Calu3 (cell line): ENCODE measurements at regions of chr16 and their contacts with region 1.

Region 1: DNA sequence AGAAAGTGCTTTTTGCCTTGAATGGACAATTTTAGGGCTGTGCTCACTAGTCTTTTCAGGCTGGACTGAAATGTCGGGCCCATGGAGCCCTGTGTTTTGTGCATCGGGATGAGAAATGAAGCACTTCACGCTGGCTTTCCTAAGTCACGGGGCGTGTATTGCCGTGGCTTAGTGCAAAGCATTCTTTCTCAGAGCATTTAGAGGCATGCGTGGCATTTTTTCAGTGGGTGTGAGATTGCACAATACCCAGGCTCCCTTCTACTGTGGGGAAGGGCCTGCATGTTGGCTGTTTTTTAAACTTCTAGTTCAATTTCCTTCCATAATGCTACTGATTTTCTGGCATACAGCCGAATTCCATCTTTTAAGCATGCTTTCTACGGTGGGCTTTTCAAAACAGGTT is 12.6 kb upstream of the POLR3E start:
- DNase-seq: no peak
- H3K4me3 Mint-ChIP-seq: no peak overlapping the region
- H3K27ac Mint-ChIP-seq: no peak overlapping the region
- H3K4me1 Mint-ChIP-seq: no peaks in the 10 kb centered on the region
- H3K27me3 Mint-ChIP-seq: no peaks in the 10 kb centered on the region
- CTCF ChIP-seq: no peak

Region 2: DNA sequence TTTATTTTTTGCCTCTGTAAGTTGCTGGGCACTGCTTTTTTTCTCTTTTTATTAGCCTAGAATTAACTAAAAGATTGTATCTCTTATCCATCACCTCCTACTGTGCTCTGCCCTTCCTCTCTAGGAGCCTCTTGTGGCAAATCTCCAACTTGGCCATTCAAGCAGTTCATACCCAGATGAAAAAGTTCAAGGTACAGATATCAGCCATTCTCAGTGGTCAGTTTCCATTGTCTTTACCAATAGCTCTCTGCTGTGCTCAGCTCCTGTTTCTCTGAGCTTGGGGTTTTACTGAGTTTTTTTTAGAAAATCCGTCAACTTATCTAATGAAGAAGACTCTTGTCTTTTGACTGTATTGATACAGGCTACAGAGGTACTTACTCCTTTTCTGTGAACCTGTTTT is 261.1 kb before region 1 on chr16:
- CTCF ChIA-PET with region 1: no interaction called
- intact Hi-C with region 1: no loop called
- DNase-seq: no peak
- H3K4me3 Mint-ChIP-seq: no peak overlapping the region
- H3K27ac Mint-ChIP-seq: no peak overlapping the region
- H3K4me1 Mint-ChIP-seq: peaks cover 75% of the 10 kb centered on the region
- H3K27me3 Mint-ChIP-seq: no peaks in the 10 kb centered on the region
- CTCF ChIP-seq: no peak

Region 3: GRCh38 chr16:22240023-22240710 is 44.5 kb before region 1 on chr16:
- CTCF ChIA-PET with region 1: no interaction called
- intact Hi-C with region 1: loop called (anchors 2 kb)
- DNase-seq: no peak
- H3K4me3 Mint-ChIP-seq: no peak overlapping the region
- H3K27ac Mint-ChIP-seq: no peak overlapping the region
- H3K4me1 Mint-ChIP-seq: peaks cover 8% of the 10 kb centered on the region
- H3K27me3 Mint-ChIP-seq: no peaks in the 10 kb centered on the region
- CTCF ChIP-seq: no peak

Region 4: GRCh38 chr16:22424161-22424937 is 139.7 kb after region 1 on chr16:
- CTCF ChIA-PET with region 1: no interaction called
- intact Hi-C with region 1: no loop called
- DNase-seq: no peak
- H3K4me3 Mint-ChIP-seq: no peak overlapping the region
- H3K27ac Mint-ChIP-seq: no peak overlapping the region
- H3K4me1 Mint-ChIP-seq: no peaks in the 10 kb centered on the region
- H3K27me3 Mint-ChIP-seq: no peaks in the 10 kb centered on the region
- CTCF ChIP-seq: no peak